ENCODE measurements at regions of chr5 and their contacts with region 1.

Region 1: DNA sequence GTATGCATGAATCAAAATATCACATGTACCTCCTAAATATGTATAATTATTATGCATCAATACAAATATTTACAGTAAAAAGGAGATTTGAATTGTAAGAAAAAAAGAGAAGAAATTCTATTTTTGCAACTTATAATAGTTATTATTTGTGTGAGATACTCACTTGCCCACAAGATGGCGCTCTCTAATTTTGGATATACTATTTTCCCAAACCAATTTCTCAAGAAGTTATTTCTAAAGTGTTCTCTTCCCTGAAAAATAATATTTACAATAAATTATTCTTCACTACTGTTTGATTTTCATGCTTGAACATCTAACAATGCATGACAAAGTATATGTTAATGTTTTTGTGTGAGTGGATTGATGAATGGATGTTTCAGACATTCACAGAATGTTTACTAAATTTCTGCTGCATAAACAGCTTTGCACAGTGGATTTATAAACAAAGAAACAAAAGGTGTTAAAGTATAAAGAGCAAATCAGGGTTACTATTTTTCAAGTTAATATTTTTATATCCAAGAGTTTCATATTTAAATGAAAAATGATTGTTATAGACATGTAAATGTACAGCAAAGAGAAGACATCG is 503.4 kb downstream of the PDE4D start:
- DNase-seq: peak; percentile 20
- ATAC-seq: no peak
- H3K4me3 ChIP-seq: no peak overlapping the region
- H3K27ac ChIP-seq: no peak overlapping the region
- H3K4me1 ChIP-seq: no peaks in the 10 kb centered on the region
- H3K27me3 ChIP-seq: 0 out of 2 replicates have a peak, but pooled peaks cover 2% of the 10 kb centered on the region
- CTCF ChIP-seq: peak; percentile 64
- POLR2A ChIP-seq: no peak
- RAD21 ChIP-seq: peak; percentile 52

Region 2: GRCh38 chr5:59496524-59497134 is 106.5 kb after region 1 on chr5:
- CTCF ChIA-PET with region 1: interaction called, 3 read pairs
- POLR2A ChIA-PET with region 1: no interaction called
- dilution Hi-C with region 1: no loop called
- in situ Hi-C with region 1: no loop called
- intact Hi-C with region 1: loop called (anchors 5 kb)
- DNase-seq: peak; percentile 5
- ATAC-seq: no peak
- H3K4me3 ChIP-seq: no peak overlapping the region
- H3K27ac ChIP-seq: no peak overlapping the region
- H3K4me1 ChIP-seq: no peaks in the 10 kb centered on the region
- H3K27me3 ChIP-seq: peaks cover 1% of the 10 kb centered on the region; the same call in 1 of the 2 replicates
- CTCF ChIP-seq: peak; percentile 51
- POLR2A ChIP-seq: no peak
- RAD21 ChIP-seq: peak; percentile 24; the same call in 1 of the 2 replicates

Region 3: DNA sequence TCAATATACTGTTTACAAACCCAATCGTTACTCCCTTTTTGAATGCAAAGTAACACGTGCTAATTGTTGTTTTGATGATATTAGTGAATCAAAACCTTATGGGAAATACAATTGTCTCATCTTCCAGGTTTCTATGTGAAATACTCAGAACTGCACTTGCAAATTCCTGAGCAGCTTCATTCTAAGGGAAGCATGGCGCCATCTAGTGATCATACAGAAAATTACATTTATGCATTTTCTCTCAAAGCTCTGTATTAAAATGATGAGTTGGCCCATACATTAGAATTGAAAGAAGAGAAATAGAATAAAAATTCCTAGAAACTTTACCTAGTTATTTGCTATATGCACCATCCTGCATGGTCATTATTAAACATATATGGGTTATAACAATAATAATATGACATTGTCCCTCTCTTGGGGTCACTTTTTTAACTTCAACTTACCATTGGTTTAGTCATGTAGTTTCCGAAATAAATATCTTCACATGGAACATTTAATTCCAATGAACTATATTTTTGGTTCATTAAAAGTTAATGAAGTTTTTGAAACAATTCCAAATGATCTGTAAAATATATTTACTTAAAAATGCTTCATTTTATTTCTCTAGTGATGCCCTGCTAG is 283.4 kb after region 1 on chr5:
- CTCF ChIA-PET with region 1: no interaction called
- POLR2A ChIA-PET with region 1: no interaction called
- dilution Hi-C with region 1: no loop called
- in situ Hi-C with region 1: no loop called
- intact Hi-C with region 1: loop called (anchors 1 kb)
- DNase-seq: peak; percentile 49
- ATAC-seq: peak; percentile 60
- H3K4me3 ChIP-seq: no peak overlapping the region
- H3K27ac ChIP-seq: no peak overlapping the region
- H3K4me1 ChIP-seq: no peaks in the 10 kb centered on the region
- H3K27me3 ChIP-seq: no peaks in the 10 kb centered on the region
- CTCF ChIP-seq: peak; percentile 78
- POLR2A ChIP-seq: no peak
- RAD21 ChIP-seq: peak; percentile 71

Region 4: GRCh38 chr5:59799668-59800346 is 409.6 kb after region 1 on chr5:
- CTCF ChIA-PET with region 1: no interaction called
- POLR2A ChIA-PET with region 1: no interaction called
- dilution Hi-C with region 1: no loop called
- in situ Hi-C with region 1: loop called (anchors 5 kb)
- intact Hi-C with region 1: loop called (anchors 1 kb)
- DNase-seq: peak; percentile 57
- ATAC-seq: peak; percentile 81
- H3K4me3 ChIP-seq: no peak overlapping the region
- H3K27ac ChIP-seq: no peak overlapping the region
- H3K4me1 ChIP-seq: no peaks in the 10 kb centered on the region
- H3K27me3 ChIP-seq: no peaks in the 10 kb centered on the region; the same call in none of the 2 replicates
- CTCF ChIP-seq: peak; percentile 83
- POLR2A ChIP-seq: no peak
- RAD21 ChIP-seq: peak; percentile 78

Measured in IMR-90 (cell line).